Psoas muscle (tissue), 8 donors: ENCODE measurements at regions of chr12 and their contacts with region 1.

Region 1: DNA sequence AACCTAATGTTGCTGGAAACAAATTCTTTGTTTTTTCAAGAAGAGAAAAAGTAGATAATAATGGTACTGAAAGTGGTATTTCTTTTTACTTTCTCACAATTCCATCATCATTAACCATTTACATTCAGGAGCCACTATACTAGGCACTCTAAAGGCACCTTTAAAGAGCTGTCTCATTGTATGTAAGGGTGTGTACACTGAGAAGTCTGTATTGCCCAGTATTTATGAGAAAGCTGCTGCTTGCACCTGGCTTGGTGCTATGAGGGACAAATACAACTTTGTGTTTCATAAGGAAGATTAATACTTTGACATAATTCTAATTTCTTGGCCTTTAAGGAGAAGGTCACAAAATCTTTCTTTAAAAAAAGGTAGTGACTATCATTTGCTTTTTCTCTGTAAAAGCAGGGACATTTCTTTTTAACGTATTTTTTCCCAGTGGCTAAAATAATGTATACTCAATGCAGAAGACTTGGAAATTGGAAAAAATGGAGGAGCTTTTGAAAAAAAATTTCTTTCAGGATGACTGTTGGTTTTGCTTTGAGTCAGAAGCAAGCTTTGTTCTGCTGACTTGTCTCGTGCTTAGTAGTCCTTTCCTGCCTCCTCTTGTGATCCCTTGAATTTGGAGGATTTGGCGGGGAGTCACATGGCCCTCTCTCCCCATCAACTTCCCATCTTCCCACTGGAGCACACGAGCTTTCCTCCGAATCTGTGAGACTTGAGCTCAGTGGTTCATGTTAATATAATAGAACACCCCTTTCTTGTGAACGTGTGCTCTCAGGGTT is 50.1 kb downstream of the RASSF3 start:
- DNase-seq: no peak
- ATAC-seq: no peak
- H3K4me3 ChIP-seq: no peak overlapping the region
- H3K27ac ChIP-seq: no peak overlapping the region
- H3K4me1 ChIP-seq: peaks cover 19% of the 10 kb centered on the region
- H3K27me3 ChIP-seq: no peaks in the 10 kb centered on the region
- CTCF ChIP-seq: no peak

Region 2: DNA sequence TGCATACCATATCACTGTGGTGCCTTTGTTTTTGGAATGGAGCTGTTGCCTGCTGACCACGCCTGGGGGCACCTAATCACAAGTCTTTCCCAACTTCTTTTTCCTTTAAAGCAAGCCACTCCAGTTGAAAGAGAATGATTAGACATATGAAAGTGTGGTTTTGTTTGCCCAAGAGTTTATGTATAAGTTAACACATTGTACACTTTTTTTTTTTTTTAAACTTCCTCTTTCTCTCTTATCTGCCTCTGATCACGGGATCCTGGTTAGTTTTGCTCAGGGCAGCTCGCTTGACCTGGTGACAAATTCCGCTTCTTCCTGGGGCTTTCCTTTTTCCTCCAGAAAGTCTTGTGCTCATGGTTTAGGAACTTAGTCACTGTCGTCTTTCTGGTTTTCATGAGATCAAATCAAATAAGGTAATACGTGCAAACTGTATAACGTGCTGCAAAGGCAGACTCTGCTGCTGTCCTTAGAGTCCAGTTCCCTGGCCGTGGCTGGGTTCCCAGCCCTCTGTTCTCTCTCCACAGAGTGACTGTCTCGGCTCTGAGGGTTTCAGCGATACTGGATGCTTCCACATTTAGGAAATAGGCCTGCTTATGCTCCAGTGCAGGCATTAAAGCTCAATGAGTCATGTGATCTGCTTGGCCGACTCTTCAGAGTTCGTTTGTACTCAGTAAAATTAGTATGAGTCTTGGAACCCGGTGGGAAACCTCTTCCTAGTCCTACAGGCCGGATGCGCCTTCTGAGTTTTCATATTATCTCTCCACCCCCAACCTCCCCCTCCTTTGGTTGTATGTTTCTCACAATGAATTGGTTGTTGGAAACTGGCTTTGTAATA is 35.0 kb before region 1 on chr12:
- intact Hi-C with region 1: loop called in 1 of 2 experiments (anchors 5 kb)
- DNase-seq: peak; percentile 48 to 59
- ATAC-seq: peak; percentile 62 to 94 (median 80)
- H3K4me3 ChIP-seq: peak overlapping the region; percentile 49
- H3K27ac ChIP-seq: peak overlapping the region; percentile 78
- H3K4me1 ChIP-seq: peaks cover 34% of the 10 kb centered on the region
- H3K27me3 ChIP-seq: no peaks in the 10 kb centered on the region
- CTCF ChIP-seq: no peak

Region 3: GRCh38 chr12:64696080-64696741 is 35.8 kb after region 1 on chr12:
- intact Hi-C with region 1: no loop called
- DNase-seq: no peak
- ATAC-seq: no peak
- H3K4me3 ChIP-seq: no peak overlapping the region
- H3K27ac ChIP-seq: no peak overlapping the region
- H3K4me1 ChIP-seq: peaks cover 9% of the 10 kb centered on the region
- H3K27me3 ChIP-seq: no peaks in the 10 kb centered on the region
- CTCF ChIP-seq: peak; percentile 35